ENCODE measurements at regions of chr9 and their contacts with region 1.

Region 1: GRCh38 chr9:69672596-69673310 is 582 bp upstream of the APBA1 start:
- DNase-seq: peak; percentile 91 to 94
- H3K4me3 ChIP-seq: peak overlapping the region; percentile 48
- H3K4me1 ChIP-seq: peaks cover 68% of the 10 kb centered on the region
- H3K27me3 ChIP-seq: no peaks in the 10 kb centered on the region

Region 2: DNA sequence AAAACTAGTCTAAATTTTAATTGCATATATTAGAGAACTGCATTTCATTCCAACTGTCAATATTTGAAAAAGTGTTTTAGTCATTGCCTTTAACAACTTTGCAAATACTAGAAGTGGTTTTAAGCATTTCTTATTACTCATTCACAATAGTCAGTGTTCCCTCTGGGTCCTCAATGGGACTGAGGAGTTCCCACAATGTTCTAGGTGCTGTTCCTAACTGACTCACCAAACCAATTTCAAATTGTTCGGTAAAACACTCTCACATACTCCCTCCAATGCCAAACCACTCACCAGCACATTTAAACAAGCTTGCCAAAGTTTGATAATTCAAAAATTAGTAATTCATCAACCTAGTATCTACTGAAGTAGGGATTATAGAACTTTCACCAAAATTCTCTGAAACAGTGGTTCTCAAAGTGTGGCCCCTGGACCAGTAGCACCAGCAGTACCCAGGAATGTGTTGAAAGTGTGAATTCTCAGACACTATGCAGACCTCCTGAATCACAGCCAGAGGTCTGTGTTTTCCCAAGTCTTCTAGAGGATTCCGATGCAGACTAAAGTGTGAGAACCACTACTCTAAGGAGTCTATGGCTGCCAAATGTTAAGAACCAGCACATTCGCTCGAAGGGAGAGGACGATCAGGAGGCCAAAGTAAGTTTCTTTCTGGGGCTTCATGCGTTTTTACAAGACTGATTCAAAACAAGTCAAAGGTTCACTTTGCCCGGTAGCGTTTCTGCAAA is 73.4 kb before region 1 on chr9:
- in situ Hi-C with region 1: no loop called
- DNase-seq: no peak
- H3K4me3 ChIP-seq: no peak overlapping the region
- H3K4me1 ChIP-seq: peaks cover 3% of the 10 kb centered on the region
- H3K27me3 ChIP-seq: no peaks in the 10 kb centered on the region

Region 3: DNA sequence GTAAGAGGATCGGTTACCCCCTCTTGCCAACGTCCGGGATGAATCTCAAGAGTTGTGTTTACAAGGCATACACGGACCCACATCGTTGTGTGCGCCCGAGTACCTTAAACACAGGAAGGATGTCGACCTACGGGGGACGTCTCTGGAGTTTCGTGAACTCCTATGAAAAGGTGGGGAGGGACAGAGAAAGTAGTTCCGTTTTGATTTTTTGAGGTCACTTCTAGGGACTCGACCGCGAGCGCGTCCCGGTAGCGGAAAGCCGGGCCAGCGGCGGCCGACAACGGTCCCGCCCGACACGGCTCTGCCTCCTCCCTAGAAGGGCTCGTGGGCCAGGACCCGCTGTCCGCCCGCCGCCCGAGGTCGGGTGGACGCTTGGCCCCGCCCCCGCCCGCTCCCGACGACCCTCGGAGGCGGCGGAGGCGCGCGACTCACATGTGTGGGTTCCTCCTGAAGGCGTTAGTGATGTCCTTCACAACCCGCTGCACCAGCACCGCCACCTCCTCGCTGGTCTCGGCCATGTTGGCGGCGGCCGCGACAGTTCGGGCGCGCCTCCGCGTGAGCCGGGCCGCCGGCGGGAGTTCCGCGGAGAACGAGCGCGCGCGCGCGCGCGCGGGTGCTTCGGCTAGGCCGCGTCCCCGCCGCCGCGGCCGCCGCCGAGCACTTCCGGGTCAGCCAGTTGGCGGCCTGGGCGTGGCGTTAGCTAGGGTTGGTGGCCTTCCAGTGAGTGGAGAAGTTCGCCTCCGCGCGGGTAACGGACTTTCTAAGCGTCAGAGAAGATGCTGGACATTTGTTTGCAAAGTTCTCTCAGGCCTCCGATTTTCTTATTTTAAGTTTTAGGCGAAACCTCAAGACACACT is 86.9 kb after region 1 on chr9 and contains the start of gene PTAR1:
- in situ Hi-C with region 1: loop called (anchors 10 kb)
- DNase-seq: peak; percentile 87 to 96
- H3K4me3 ChIP-seq: peak within 1 kb of the TSS; percentile 71
- H3K4me1 ChIP-seq: peaks cover 52% of the 10 kb centered on the region
- H3K27me3 ChIP-seq: no peaks in the 10 kb centered on the region

Region 4: DNA sequence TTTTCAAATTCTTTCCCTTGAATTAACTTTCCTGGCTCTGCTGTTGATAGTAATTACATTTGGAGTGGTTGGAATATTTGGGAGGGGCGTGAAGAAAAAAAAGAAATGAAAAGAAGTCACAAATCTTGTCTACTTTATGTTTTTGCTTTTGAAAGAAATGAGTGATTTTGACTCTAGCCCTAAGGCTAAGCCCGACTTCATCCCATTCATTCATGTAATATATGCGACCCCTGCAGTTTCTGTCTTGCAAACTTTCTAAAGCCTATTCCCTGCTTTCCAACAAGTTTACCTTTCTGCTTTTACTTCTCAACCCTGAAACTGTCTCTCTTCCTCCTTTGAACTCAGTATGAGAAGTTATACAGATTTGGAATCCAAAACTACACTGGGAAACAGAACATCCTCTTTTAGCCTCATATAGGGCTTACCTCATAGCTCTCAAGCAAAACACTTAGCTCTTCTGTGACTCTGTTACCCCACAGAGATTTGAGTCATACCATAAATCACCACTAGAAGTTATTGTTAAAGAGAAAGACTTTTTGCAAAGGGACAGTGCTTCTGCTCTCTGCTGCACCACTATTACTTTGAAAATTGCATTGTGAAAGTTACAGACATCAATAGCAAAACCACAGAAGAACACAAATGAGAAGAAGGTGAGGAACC is 149.5 kb after region 1 on chr9:
- in situ Hi-C with region 1: loop called (anchors 10 kb)
- DNase-seq: peak; percentile 36 to 92
- H3K4me3 ChIP-seq: no peak overlapping the region
- H3K4me1 ChIP-seq: peaks cover 49% of the 10 kb centered on the region
- H3K27me3 ChIP-seq: no peaks in the 10 kb centered on the region

Region 5: DNA sequence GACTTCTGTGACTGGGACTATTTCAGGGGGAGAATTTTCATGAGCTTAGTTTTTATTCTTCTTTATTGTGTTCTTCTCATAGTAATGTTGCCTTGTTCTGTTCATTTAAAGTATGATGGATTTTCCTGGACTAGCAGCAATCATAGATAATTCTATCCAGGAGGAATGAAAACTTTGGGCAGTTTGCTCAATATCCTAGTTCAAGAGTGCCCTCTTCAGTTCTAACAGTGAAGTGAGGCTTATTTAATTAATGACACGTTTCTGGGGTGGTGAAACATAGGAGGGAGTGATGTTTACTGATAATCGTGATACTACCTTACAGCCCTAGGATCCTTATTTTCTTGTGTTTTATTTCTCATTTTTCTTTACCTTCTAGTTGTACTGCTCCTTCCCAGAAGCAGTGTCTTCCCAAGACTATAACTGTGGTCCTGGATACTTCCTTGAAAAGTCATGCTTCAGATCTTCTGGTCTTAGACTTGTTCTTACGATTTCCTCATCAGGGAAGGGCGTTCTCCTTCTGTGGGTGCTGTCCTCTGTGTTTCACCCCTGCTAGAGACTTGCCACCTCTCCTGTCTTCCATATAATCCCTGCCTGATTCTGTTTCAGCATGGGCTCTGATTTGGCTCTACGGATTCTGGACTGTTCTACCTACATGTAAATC is 205.2 kb after region 1 on chr9:
- in situ Hi-C with region 1: loop called (anchors 10 kb)
- DNase-seq: peak in 1 of 2 experiments; percentile 95
- H3K4me3 ChIP-seq: no peak overlapping the region
- H3K4me1 ChIP-seq: peaks cover 36% of the 10 kb centered on the region
- H3K27me3 ChIP-seq: no peaks in the 10 kb centered on the region